ENCODE measurements at regions of chr13 and their contacts with region 1.

Region 1: DNA sequence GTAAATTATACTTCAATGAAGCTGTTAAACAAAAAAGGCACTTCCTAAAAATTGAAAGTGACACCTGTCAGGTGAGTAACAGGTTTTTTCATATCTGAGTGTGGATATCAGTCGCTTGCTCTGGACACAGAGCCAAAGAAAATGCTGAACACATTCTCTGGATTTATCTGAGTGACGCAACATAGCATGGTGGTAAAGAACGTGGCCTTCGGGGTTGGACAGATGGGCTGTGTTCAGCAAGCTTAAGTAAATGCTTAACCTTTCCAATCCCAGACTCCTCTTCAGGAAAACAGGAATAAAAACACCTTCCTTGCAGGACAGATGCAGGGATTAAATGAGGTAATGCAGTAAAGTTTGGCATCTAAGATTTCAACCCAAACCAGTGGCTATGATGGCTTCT is 132.0 kb downstream of the FOXO1 start:
- DNase-seq: no peak
- ATAC-seq: no peak
- H3K4me3 Mint-ChIP-seq: no peak overlapping the region
- H3K27ac Mint-ChIP-seq: no peak overlapping the region
- H3K4me1 Mint-ChIP-seq: peaks cover 40% of the 10 kb centered on the region
- H3K27me3 Mint-ChIP-seq: no peaks in the 10 kb centered on the region
- CTCF ChIP-seq: no peak

Region 2: DNA sequence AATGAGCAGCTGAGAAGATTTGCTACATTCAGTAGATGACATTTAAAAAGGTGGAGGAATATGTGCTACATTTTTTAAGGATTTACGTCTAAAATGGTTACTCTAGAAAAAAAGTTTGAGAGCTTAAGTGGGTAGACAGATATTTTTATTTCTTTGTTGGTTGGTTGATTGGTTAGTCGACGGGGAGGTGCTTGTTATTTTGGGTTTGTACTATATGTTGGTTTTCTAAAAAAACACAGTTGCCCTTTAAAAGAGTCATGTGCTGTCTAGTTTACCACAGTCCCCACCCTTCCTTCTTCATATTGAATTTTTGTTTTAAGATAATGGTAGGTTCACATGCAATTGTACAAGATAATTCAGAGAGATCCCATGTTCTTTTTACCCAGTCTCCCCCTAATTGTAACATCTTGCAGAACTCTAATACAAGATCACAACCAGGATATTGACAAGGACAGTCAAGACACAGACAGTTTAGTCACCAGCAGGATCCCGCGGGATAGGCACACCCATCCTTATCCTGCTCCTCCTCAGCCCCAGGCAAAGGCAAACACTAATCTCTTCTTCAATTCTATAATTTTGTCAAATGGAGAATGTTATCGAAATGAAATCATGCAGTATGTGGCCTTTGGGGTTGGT is 39.4 kb before region 1 on chr13:
- CTCF ChIA-PET with region 1: no interaction called
- POLR2A ChIA-PET with region 1: no interaction called
- intact Hi-C with region 1: loop called (anchors 5 kb)
- DNase-seq: no peak
- ATAC-seq: peak; percentile 49
- H3K4me3 Mint-ChIP-seq: peak overlapping the region; percentile 71
- H3K27ac Mint-ChIP-seq: peak overlapping the region; percentile 85
- H3K4me1 Mint-ChIP-seq: peaks cover 44% of the 10 kb centered on the region
- H3K27me3 Mint-ChIP-seq: no peaks in the 10 kb centered on the region
- CTCF ChIP-seq: no peak

Region 3: DNA sequence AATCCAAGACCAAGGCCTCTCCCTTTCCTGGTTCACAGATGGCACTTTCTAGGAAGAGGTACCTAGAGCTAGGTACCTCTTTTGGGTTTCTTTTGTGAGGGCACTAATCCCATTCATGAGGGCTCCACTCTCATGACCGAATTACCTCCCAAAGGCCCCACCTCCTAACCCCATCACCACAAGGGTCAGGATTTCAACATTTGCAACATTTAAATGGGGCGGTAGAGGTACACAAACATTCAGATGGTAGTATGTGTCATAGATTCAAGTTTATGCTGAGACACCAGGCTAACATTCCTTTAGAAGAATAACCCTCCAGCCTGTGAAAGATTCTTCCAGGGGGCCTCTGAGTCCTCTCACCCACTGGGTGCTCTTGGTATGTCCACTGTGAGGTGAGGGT is 15.7 kb after region 1 on chr13:
- CTCF ChIA-PET with region 1: no interaction called
- POLR2A ChIA-PET with region 1: interaction called, 3 read pairs
- intact Hi-C with region 1: loop called (anchors 2 kb)
- DNase-seq: no peak
- ATAC-seq: no peak
- H3K4me3 Mint-ChIP-seq: no peak overlapping the region
- H3K27ac Mint-ChIP-seq: peak overlapping the region; percentile 7
- H3K4me1 Mint-ChIP-seq: peaks cover 44% of the 10 kb centered on the region
- H3K27me3 Mint-ChIP-seq: no peaks in the 10 kb centered on the region
- CTCF ChIP-seq: no peak

Region 4: DNA sequence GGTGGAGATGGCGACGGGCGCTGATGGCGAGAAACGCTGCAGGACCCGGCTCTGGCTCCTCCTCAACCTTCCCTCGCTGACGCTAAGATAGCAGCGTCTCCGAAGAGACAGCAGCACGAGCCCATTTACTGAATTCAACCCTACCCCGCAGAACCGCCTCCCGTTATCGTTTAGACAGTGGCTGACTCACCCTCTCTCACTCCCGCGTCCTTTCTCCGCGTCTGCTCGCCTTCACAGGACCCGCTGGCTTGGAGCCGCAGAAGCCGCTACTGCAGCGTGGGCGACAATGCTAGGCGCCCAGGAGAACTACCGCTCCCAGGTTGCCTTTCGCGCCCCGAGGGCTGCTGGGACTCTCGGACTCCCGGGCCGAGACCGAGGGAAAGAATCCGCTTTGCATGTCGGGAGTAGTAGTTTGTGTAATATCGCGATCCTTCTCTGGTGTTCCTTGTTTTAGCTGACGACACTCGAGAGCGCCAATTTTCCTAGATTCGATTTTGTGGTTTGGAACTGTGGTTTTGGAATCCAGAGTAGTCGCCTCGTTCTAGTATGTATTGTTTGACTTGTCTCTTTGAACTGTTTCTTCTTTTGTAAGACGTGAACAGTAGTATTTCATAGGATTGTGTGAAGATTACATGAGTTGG is 598.2 kb after region 1 on chr13 and contains the start of gene KBTBD6:
- CTCF ChIA-PET with region 1: no interaction called
- POLR2A ChIA-PET with region 1: no interaction called
- intact Hi-C with region 1: no loop called
- DNase-seq: peak; percentile 83
- ATAC-seq: peak; percentile 97
- H3K4me3 Mint-ChIP-seq: peak within 1 kb of the TSS; percentile 98
- H3K27ac Mint-ChIP-seq: peak within 1 kb of the TSS; percentile 91
- H3K4me1 Mint-ChIP-seq: peaks cover 47% of the 10 kb centered on the region
- H3K27me3 Mint-ChIP-seq: no peaks in the 10 kb centered on the region
- CTCF ChIP-seq: no peak
- total RNA-seq, gene KBTBD6: 5.1 and 6.0 TPM in 2 replicates